H1 (cell line): ENCODE measurements at regions of chr7 and their contacts with region 1.

Region 1: GRCh38 chr7:36141351-36141750 is 11.7 kb upstream of the EEPD1 start:
- DNase-seq: no peak
- H3K4me3 ChIP-seq: no peak overlapping the region
- H3K27ac ChIP-seq: no peak overlapping the region
- H3K4me1 ChIP-seq: no peaks in the 10 kb centered on the region
- H3K27me3 ChIP-seq: peaks cover 0 to 2% (median 0%) of the 10 kb centered on the region in 4 experiments; a peak in 1 of 7 replicates
- CTCF ChIP-seq: no peak
- EP300 ChIP-seq: no peak
- POLR2A ChIP-seq: no peak
- RAD21 ChIP-seq: no peak

Region 2: DNA sequence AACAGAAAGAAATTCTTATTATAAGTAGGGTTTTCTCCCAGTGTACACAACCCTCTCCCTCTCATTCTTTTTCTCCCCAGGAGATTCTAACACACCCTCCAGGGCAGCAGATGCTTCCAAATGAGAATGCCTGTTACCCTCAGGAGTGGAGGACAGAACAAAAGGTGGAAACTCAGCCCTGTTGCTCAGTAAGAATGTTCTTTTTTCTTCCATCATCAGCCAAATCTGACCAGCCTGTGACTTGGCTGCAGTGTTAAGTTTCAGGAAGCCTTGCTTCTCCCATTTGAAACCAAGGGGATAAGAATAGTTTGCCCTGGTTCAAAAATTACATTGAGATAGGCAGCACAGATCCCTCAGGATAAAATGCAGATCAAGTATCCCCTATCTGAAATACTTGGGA is 65.8 kb before region 1 on chr7:
- CTCF ChIA-PET with region 1: no interaction called
- POLR2A ChIA-PET with region 1: no interaction called
- DNase-seq: no peak
- H3K4me3 ChIP-seq: no peak overlapping the region
- H3K27ac ChIP-seq: no peak overlapping the region
- H3K4me1 ChIP-seq: no peaks in the 10 kb centered on the region; a peak in 1 of 7 replicates
- H3K27me3 ChIP-seq: no peaks in the 10 kb centered on the region
- CTCF ChIP-seq: no peak
- EP300 ChIP-seq: no peak
- POLR2A ChIP-seq: no peak
- RAD21 ChIP-seq: no peak

Region 3: DNA sequence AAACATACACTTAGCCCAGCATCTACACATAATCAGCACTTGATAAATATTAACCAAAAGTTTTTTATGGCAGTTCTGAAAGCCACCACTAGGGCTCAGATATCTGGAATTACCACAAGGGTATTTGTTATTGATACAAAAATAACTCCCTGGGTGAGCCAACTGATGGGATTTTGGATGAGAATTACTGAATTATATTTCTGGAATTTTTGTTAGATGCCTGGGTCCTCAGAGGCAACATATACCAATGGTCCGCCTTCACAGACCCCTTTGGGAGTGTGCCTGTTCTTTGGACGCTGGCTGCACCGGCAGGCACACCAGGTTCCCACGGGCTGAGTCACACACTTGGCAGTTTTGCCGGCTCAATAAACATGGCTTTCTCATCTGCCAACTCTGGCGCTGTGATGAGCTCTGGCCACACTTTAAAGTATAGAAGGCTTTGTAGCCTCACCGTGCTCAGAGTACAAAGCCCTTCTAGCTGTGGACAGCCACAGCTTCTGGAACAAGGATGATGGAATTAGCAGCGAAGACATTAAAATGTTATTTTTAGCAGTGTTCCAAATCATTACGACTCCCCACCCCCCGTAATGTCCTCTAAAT is 12.8 kb before region 1 on chr7:
- CTCF ChIA-PET with region 1: interaction called, 11 read pairs
- POLR2A ChIA-PET with region 1: interaction called, 3 read pairs
- DNase-seq: peak in 1 of 2 experiments; percentile 60
- H3K4me3 ChIP-seq: no peak overlapping the region
- H3K27ac ChIP-seq: no peak overlapping the region
- H3K4me1 ChIP-seq: no peaks in the 10 kb centered on the region
- H3K27me3 ChIP-seq: no peaks in the 10 kb centered on the region
- CTCF ChIP-seq: peak in 1 of 3 experiments; percentile 41; a peak in 2 of 4 replicates
- EP300 ChIP-seq: no peak
- POLR2A ChIP-seq: no peak
- RAD21 ChIP-seq: no peak